Activated CD4-positive, alpha-beta memory T cell treated with anti-CD3 and anti-CD28 coated beads for 36 hours (primary cell): ENCODE measurements at regions of chr2 and their contacts with region 1.

Region 1: DNA sequence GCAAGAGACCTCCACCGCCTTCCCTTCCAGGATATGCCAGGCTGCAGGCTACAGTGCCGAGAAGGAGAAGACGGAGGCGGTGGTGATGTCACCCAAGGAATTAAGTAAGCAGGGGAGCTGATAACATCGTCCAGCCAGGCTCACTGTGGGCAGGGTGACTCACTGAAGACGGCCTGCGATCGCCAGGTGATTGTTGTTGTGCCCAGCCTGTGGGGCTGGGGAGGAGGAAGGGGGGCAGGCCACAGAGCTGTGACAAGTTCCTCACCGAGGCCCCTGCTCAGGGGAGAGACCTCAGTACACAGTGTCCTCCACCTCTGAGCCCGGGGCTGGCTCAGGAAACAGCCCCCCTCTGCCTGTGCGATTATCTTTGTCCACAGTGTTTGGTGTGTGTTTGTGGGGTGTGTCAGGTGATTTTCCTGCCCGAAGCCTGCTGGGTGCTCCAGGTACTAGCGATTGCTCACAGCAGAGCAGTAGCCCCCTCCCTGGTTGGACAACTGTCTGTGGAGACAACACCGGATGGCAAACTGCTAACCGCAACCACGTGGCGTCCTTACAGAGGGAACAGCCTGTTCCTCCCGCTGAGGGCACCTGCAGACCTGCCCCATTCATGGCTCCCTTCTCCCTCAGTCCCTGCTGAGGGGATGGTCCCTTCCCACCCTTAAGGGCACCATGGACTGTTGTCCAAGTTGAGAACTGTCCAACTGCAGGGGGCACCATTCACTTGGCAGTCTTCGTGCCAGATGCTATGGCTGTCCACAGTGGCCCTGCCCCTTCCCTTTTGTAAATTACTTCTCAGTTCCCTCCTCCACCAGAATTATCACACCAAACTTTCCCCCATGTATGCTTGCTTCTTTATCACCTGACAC is 95.1 kb downstream of the ZFP36L2 start:
- DNase-seq: peak; percentile 91
- H3K4me3 Mint-ChIP-seq: peak overlapping the region; percentile 11
- H3K27ac Mint-ChIP-seq: peak overlapping the region; percentile 89
- H3K4me1 Mint-ChIP-seq: peaks cover 88% of the 10 kb centered on the region
- H3K27me3 Mint-ChIP-seq: no peaks in the 10 kb centered on the region

Region 2: DNA sequence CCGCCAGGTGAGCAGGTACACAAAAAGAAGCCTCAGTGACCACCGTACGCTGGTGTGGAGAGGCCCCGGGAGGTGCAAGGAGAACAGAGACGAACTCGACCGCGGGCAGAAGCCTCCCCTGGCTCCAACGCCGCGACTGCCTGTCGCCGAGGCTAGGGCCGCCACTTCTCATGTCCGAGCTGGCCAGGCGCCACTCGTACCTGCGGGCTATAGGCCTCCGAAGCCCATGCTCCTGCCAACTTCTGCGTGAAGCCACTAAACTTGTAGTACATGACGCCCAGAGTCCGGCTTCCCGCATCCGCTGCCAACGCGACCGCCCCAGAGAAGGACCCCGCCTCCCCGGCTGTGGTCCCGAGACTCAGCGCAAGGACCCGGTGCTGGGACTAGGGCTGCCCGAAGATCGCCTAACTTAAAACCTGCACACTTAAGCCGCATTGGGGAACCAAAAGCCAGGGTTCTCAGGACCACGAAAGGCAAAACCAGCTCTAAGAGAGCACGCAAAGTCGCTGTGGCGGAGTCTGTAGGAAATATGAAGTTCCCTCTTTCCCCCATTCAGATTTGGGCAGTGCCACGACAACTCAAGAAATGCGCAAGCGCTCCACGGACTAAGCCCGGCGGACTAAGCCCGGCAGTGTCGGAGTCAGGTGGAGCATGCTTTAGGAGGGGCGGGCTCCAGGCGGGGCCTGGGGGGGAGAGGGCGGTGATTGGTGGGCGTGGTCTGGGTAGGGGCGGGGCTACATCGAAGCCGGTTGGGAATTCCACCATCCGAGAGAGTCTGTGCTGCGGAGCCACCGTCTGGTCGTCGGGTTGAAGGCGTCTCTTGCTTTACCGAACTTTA is 770.1 kb before region 1 on chr2 and contains the start of gene COX7A2L:
- CTCF ChIA-PET with region 1: no interaction called
- POLR2A ChIA-PET with region 1: no interaction called
- intact Hi-C with region 1: loop called (anchors 2 kb)
- DNase-seq: peak; percentile 98
- H3K4me3 Mint-ChIP-seq: peak within 1 kb of the TSS; percentile 84
- H3K27ac Mint-ChIP-seq: peak within 1 kb of the TSS; percentile 99
- H3K4me1 Mint-ChIP-seq: peaks cover 47% of the 10 kb centered on the region
- H3K27me3 Mint-ChIP-seq: no peaks in the 10 kb centered on the region
- total RNA-seq, gene COX7A2L: 102 to 107 TPM

Region 3: GRCh38 chr2:42944779-42945415 is 186.4 kb before region 1 on chr2:
- CTCF ChIA-PET with region 1: interaction called, 12 read pairs
- POLR2A ChIA-PET with region 1: no interaction called
- intact Hi-C with region 1: loop called (anchors 5 kb)
- DNase-seq: no peak
- H3K4me3 Mint-ChIP-seq: no peak overlapping the region
- H3K27ac Mint-ChIP-seq: no peak overlapping the region
- H3K4me1 Mint-ChIP-seq: no peaks in the 10 kb centered on the region
- H3K27me3 Mint-ChIP-seq: no peaks in the 10 kb centered on the region

Region 4: GRCh38 chr2:42987112-42987922 is 143.9 kb before region 1 on chr2:
- CTCF ChIA-PET with region 1: no interaction called
- POLR2A ChIA-PET with region 1: no interaction called
- intact Hi-C with region 1: no loop called
- DNase-seq: no peak
- H3K4me3 Mint-ChIP-seq: no peak overlapping the region
- H3K27ac Mint-ChIP-seq: no peak overlapping the region
- H3K4me1 Mint-ChIP-seq: no peaks in the 10 kb centered on the region
- H3K27me3 Mint-ChIP-seq: peaks cover 3% of the 10 kb centered on the region

Region 5: GRCh38 chr2:43169987-43170386 is 38.7 kb after region 1 on chr2:
- CTCF ChIA-PET with region 1: interaction called, 18 read pairs
- POLR2A ChIA-PET with region 1: interaction called, 11 read pairs
- intact Hi-C with region 1: loop called (anchors 1 kb)
- DNase-seq: peak; percentile 88
- H3K4me3 Mint-ChIP-seq: peak overlapping the region; percentile 43
- H3K27ac Mint-ChIP-seq: peak overlapping the region; percentile 85
- H3K4me1 Mint-ChIP-seq: peaks cover 81% of the 10 kb centered on the region
- H3K27me3 Mint-ChIP-seq: no peaks in the 10 kb centered on the region

Region 6: DNA sequence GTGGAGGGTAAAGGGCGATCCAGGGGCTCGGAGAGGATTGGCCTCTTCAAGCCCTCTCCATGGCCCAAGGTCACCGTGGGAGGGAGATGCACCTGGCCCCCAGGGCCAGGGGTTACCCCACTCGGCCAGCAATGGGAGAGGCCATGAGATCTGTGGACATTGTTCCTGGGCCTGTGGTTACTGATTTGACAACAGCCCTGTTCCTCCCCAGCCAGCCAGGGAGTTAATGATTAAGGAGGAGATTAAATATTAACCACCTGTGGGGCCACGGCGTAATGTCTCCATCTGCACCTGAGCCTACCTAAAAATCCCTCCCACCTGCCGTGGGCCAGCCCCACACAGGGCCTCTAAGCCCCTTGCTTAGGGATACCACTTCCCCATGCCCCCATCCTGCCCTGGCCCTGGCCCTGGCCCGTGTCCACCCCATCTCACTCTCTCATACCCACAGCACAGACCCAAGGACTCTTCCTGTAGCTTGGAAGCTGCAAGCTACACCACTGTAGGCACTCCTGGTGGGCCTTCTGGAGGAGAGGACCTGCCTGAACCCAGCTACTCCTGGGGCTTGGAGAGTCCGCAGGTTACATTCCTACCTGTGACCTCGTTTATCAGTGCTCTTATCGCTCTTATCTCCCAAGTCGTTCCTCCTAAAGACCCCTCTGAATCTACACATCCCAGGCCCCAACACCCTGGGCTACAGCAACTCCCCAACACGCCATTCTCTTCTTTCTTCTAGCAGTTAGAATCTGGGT is 63.0 kb after region 1 on chr2:
- CTCF ChIA-PET with region 1: interaction called, 4 read pairs
- POLR2A ChIA-PET with region 1: interaction called, 3 read pairs
- intact Hi-C with region 1: loop called (anchors 1 kb)
- DNase-seq: no peak
- H3K4me3 Mint-ChIP-seq: peak overlapping the region; percentile 77
- H3K27ac Mint-ChIP-seq: peak overlapping the region; percentile 97
- H3K4me1 Mint-ChIP-seq: peaks cover 57% of the 10 kb centered on the region
- H3K27me3 Mint-ChIP-seq: no peaks in the 10 kb centered on the region

Region 7: GRCh38 chr2:43293744-43294695 is 162.8 kb after region 1 on chr2:
- CTCF ChIA-PET with region 1: no interaction called
- POLR2A ChIA-PET with region 1: no interaction called
- intact Hi-C with region 1: loop called (anchors 1 kb)
- DNase-seq: peak; percentile 71
- H3K4me3 Mint-ChIP-seq: no peak overlapping the region
- H3K27ac Mint-ChIP-seq: peak overlapping the region; percentile 58
- H3K4me1 Mint-ChIP-seq: peaks cover 28% of the 10 kb centered on the region
- H3K27me3 Mint-ChIP-seq: no peaks in the 10 kb centered on the region

Region 8: GRCh38 chr2:43312755-43313641 is 181.7 kb after region 1 on chr2:
- CTCF ChIA-PET with region 1: no interaction called
- POLR2A ChIA-PET with region 1: no interaction called
- intact Hi-C with region 1: no loop called
- DNase-seq: no peak
- H3K4me3 Mint-ChIP-seq: no peak overlapping the region
- H3K27ac Mint-ChIP-seq: no peak overlapping the region
- H3K4me1 Mint-ChIP-seq: peaks cover 14% of the 10 kb centered on the region
- H3K27me3 Mint-ChIP-seq: no peaks in the 10 kb centered on the region

Region 9: DNA sequence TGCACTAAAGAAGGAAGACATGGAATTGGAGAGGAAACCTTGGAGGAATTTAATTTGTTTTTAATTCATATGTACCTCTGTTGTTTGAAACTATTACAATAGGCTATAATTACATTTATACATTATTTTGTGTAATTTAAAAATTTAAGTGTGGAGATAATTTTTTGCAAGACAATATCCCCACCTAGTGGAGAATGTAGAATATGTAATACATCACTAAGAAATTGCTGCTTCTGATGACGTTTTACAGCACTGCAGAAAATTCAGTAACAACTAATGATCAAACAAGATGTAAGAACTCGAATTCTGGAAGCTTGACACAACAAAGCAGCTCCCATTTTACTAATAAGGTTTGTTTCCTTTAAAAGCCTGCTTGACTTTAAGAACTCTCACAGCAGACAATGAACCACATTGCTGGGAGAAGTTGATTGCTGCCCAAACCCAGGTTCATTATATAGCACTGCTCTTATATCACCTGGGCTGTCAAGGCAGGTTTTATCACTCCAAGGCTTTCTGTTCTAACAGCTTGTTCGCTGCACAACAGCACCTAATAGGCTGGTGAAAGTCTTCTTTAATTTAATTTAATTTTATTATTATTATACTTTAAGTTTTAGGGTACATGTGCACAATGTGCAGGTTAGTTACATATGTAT is 411.2 kb after region 1 on chr2:
- CTCF ChIA-PET with region 1: interaction called, 16 read pairs
- POLR2A ChIA-PET with region 1: no interaction called
- intact Hi-C with region 1: loop called (anchors 1 kb)
- DNase-seq: no peak
- H3K4me3 Mint-ChIP-seq: no peak overlapping the region
- H3K27ac Mint-ChIP-seq: no peak overlapping the region
- H3K4me1 Mint-ChIP-seq: peaks cover 21% of the 10 kb centered on the region
- H3K27me3 Mint-ChIP-seq: no peaks in the 10 kb centered on the region